Activated CD4-positive, alpha-beta memory T cell treated with anti-CD3 and anti-CD28 coated beads for 36 hours (primary cell): ENCODE measurements at regions of chr12 and their contacts with region 1.

Region 1: DNA sequence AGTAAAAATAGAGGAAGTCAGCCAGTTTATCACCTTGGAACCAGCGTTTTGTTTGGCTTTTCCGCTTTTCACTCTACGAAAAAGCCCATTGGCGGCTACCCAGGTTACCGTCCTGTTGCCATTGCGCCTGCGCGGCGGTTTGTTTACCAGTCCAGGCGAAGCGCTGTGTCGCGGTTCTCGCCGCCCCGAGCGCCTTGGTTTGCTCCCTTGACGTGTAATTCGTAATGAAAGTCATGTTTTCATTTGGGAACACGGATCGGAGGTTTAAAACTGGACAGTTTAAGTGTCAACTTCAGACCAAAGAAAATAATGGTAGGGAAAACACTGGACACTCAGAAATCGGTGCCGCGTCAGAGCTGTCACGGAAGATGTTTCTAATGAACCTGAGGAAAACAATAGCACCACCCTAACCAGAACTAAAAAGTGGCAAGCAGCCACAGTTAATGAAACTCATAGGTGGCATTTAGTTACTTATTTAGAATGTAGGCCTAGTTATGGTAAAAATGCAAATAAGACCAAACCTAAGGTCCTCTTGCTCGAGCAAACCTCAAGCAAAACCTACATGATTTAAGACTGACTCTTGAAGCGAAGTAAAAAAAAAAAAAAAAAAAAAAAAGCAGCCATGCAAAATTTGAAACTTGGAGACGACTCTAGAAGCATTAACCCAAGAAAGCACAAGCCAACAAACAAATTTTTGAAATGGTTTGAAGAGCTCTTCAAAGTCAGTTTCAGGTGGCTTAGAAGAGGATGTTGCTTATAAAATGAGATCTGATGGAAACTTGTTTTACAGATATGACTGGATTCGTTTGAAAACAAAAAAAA is 790 bp upstream of the GPR19 start:
- DNase-seq: peak; percentile 92
- H3K4me3 Mint-ChIP-seq: peak overlapping the region; percentile 92
- H3K27ac Mint-ChIP-seq: peak overlapping the region; percentile 98
- H3K4me1 Mint-ChIP-seq: peaks cover 65% of the 10 kb centered on the region
- H3K27me3 Mint-ChIP-seq: no peaks in the 10 kb centered on the region

Region 2: GRCh38 chr12:12425616-12426015 is 271.2 kb before region 1 on chr12:
- CTCF ChIA-PET with region 1: no interaction called
- POLR2A ChIA-PET with region 1: no interaction called
- intact Hi-C with region 1: no loop called
- DNase-seq: no peak
- H3K4me3 Mint-ChIP-seq: no peak overlapping the region
- H3K27ac Mint-ChIP-seq: peak overlapping the region; percentile 42
- H3K4me1 Mint-ChIP-seq: peaks cover 54% of the 10 kb centered on the region
- H3K27me3 Mint-ChIP-seq: no peaks in the 10 kb centered on the region

Region 3: GRCh38 chr12:12673296-12673695 is 23.5 kb before region 1 on chr12:
- CTCF ChIA-PET with region 1: interaction called, 3 read pairs
- POLR2A ChIA-PET with region 1: interaction called, 5 read pairs
- intact Hi-C with region 1: loop called (anchors 2 kb)
- DNase-seq: peak; percentile 61
- H3K4me3 Mint-ChIP-seq: no peak overlapping the region
- H3K27ac Mint-ChIP-seq: peak overlapping the region; percentile 43
- H3K4me1 Mint-ChIP-seq: peaks cover 26% of the 10 kb centered on the region
- H3K27me3 Mint-ChIP-seq: no peaks in the 10 kb centered on the region

Region 4: DNA sequence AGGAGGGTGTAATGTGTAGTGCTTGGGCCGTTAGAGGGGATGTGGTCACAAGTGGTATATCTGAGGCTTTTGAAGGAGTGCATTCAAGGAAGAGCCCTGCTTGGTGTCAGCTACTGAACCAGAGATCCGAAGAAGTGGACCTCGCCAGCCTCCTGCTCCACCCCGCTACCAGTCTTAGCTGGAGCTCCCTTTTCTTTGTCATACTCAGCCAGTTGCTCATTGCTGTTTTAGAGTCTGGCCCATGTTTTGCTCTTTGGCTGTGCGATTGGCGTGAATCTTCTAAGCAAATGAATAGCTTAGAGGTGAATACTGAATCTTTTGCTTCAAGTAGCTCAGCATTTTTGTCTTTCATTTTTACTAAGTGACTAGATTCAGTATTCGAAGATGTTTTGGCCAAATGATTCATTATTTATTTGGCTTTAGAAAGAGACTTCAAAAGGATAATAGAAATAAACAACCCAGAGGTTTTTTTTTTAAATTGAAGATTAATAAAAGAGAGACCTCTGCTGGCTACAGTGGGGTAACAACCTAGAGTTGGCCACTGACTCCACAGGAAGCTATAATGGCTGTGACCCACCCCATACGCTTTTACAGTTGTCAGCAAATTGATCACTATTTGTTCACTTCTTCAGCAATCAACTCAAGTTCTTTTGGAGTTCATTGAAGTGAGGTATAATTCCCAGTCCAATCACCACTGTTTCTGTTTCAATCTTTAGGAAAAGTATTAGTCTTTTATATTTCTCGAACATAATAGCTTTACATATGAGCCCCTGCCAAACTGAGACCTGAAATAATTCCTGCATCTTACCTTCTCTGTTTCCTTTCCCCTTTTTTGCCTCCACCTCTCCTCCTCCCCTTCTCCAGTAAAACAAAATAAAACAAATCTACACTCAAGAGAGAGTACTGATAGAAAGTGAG is 40.2 kb after region 1 on chr12:
- CTCF ChIA-PET with region 1: interaction called, 19 read pairs
- POLR2A ChIA-PET with region 1: interaction called, 15 read pairs
- intact Hi-C with region 1: no loop called
- DNase-seq: peak; percentile 76
- H3K4me3 Mint-ChIP-seq: peak overlapping the region; percentile 59
- H3K27ac Mint-ChIP-seq: peak overlapping the region; percentile 88
- H3K4me1 Mint-ChIP-seq: peaks cover 46% of the 10 kb centered on the region
- H3K27me3 Mint-ChIP-seq: no peaks in the 10 kb centered on the region